AG04450 (cell line): ENCODE measurements at regions of chr9 and their contacts with region 1.

Region 1: GRCh38 chr9:126301985-126302603 is 24.5 kb upstream of the MVB12B start:
- DNase-seq: peak; percentile 37
- H3K4me3 ChIP-seq: no peak overlapping the region
- H3K27ac ChIP-seq: no peak overlapping the region
- H3K27me3 ChIP-seq: peaks cover 27% of the 10 kb centered on the region
- CTCF ChIP-seq: peak; percentile 92

Region 2: DNA sequence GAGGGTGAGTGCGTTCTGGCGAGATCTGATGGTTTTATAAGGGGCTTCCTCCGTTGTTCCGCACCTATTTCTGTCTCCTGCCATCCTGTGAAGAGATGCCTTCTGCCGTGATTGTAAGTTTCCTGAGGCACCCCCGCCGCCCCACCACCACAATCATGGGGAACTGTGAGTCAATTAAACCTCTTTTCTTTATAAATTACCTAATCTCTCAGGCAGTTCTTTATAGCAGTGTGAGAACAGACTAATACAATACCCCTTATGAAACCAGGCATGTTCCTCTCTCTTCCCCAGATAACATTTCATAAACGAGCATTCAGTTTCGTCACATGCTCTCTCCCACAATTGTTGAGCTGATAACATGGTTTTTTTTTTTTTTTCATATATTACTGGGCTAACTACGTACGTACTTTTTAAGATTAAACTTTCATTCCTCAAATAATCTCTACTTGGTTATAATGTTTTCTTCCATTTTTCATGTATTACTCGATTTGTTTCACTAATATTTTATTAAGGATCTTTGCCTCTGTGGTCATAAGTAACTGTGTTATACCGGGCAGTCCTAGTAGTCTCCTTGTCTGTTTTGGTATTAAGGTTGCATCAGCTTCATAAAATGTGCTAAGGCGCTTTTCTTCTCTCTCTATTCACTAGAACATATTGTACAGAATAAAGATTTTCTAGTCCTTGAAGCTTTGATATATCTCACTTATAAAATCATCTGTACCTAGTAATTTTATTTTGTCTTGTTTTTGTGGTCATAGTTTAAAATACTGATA is 40.3 kb before region 1 on chr9:
- CTCF ChIA-PET with region 1: no interaction called
- POLR2A ChIA-PET with region 1: no interaction called
- DNase-seq: no peak
- H3K4me3 ChIP-seq: no peak overlapping the region
- H3K27ac ChIP-seq: no peak overlapping the region
- H3K27me3 ChIP-seq: peaks cover 13% of the 10 kb centered on the region
- CTCF ChIP-seq: no peak

Region 3: DNA sequence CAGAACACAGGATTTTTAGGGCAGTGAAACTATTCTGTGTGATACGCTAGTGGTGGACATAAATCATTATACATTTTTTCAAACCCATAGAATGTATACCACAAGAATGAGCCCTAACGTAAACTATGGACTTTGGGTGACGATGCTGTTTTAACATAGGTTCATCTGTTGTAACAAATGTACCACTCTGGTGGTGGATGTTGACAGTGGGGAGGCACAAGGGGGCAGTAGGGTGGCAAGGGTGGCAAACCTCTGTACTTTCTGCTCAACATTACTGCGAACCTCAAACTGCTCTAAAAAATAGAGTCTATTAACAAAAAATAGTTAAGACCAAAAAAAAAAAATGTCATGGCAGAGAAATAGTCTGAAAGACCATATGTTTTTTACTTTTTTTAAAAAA is 15.4 kb after region 1 on chr9:
- CTCF ChIA-PET with region 1: interaction called, 13 read pairs
- POLR2A ChIA-PET with region 1: no interaction called
- DNase-seq: no peak
- H3K4me3 ChIP-seq: no peak overlapping the region
- H3K27ac ChIP-seq: no peak overlapping the region
- H3K27me3 ChIP-seq: peaks cover 4% of the 10 kb centered on the region
- CTCF ChIP-seq: peak; percentile 32; the same call in 1 of the 2 replicates

Region 4: DNA sequence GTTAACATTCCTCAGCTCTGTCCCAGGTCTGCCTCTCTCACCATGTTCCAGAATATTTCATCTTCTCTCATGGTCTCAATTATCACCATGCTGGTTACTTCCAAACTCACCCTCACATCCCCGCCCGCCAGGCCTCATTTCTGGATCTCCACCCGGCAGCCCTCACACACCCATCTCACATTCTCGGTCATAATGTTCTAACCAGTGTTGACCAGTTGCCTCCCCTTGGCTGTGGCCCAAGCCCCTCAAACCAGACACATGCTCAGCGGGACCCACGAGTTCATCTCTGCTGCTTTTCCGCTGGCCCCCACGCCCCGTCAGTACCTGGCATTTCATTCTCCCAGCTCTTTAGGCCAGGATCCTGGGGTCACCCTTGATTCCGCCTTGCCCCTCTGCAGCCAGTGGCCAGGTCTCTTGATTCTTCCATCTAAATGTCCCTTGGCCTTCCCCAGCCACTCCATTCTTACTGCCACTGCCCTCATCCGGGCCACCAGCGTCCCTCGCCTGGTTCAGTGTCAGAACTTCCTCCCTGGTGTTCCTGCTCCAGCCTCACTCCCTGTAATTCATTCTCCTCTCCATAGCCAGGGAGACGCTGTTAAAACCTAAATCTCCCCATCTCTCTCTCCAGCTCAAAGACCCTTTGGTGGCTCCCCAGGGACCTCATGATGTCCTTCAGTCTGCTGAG is 166.2 kb after region 1 on chr9:
- CTCF ChIA-PET with region 1: no interaction called
- POLR2A ChIA-PET with region 1: no interaction called
- DNase-seq: no peak
- H3K4me3 ChIP-seq: no peak overlapping the region
- H3K27ac ChIP-seq: no peak overlapping the region
- H3K27me3 ChIP-seq: no peaks in the 10 kb centered on the region
- CTCF ChIP-seq: no peak